MCF 10A (cell line): ENCODE measurements at regions of chr2 and their contacts with region 1.

Region 1: DNA sequence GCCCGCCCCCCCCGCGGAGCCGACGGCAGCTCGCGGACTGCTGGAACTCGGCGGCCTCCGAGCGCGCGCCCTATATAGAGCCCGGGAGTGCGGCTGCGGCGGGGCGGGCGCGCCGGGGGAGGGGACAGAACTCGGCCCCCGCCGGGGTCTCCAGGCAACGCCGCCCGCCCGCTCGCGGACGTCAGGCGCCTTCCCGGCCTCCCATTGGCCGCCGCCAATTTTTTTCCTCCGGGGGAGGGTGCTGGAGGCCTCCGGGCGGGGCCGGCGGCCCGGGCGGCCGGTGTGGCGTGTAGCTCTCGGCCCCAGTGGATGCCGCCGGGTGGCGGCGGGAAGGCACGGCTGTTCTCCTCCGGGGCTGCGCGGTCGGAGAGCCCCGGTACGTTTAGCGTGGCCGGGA is at the start of gene ZFP36L2:
- DNase-seq: peak; percentile 95
- H3K4me3 Mint-ChIP-seq: peak within 1 kb of the TSS; percentile 93
- H3K27ac Mint-ChIP-seq: peak within 1 kb of the TSS; percentile 83
- H3K4me1 Mint-ChIP-seq: peaks cover 17% of the 10 kb centered on the region
- H3K27me3 Mint-ChIP-seq: no peaks in the 10 kb centered on the region
- CTCF ChIP-seq: no peak
- total RNA-seq, gene ZFP36L2: 107 and 162 TPM in 2 replicates

Region 2: GRCh38 chr2:42859006-42859552 is 367.5 kb before region 1 on chr2:
- CTCF ChIA-PET with region 1: interaction called, 17 read pairs
- POLR2A ChIA-PET with region 1: interaction called, 4 read pairs
- intact Hi-C with region 1: loop called (anchors 1 kb)
- DNase-seq: peak; percentile 82
- H3K4me3 Mint-ChIP-seq: no peak overlapping the region
- H3K27ac Mint-ChIP-seq: no peak overlapping the region
- H3K4me1 Mint-ChIP-seq: peaks cover 12% of the 10 kb centered on the region
- H3K27me3 Mint-ChIP-seq: no peaks in the 10 kb centered on the region
- CTCF ChIP-seq: peak; percentile 91

Region 3: DNA sequence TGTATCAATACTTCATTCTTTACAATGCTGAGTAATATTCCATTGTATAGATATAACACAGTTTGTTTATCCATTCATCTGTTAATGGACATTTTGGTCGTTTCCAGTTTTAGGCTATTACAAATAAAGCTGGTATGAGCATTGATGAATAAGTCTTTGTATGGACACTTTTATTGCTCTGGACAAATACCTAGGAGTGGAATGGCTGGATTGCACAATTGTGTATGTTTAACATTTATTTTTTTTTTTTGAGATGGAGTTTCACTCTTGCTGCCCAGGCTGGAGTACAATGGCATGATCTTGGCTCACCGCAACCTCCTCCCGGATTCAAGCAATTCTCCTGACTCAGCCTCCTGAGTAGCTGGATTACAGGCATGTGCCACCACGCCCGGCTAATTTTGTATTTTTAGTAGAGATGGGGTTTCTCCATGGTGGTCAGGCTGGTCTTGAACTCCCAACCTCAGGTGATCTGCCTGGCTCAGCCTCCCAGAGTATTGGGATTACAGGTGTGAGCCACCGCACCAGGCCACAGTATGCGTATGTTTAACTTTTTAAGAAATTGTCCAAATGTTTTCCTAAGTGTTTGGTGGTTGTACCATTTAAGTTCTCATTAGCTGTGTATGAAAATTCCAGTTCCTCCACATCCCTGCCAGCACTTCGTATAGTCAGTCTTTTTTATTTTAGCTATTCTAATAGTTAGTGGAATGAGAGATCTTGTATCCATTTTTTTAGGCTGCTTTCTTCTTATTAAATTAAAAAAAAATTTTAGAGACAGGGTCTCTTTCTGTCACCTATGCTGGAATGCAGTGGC is 239.2 kb before region 1 on chr2:
- CTCF ChIA-PET with region 1: interaction called, 18 read pairs
- POLR2A ChIA-PET with region 1: interaction called, 28 read pairs
- intact Hi-C with region 1: no loop called
- DNase-seq: peak; percentile 88
- H3K4me3 Mint-ChIP-seq: no peak overlapping the region
- H3K27ac Mint-ChIP-seq: peak overlapping the region; percentile 90
- H3K4me1 Mint-ChIP-seq: peaks cover 19% of the 10 kb centered on the region
- H3K27me3 Mint-ChIP-seq: no peaks in the 10 kb centered on the region
- CTCF ChIP-seq: no peak

Region 4: GRCh38 chr2:43059183-43059897 is 167.2 kb before region 1 on chr2:
- CTCF ChIA-PET with region 1: interaction called, 3 read pairs
- POLR2A ChIA-PET with region 1: interaction called, 14 read pairs
- intact Hi-C with region 1: no loop called
- DNase-seq: peak; percentile 98
- H3K4me3 Mint-ChIP-seq: no peak overlapping the region
- H3K27ac Mint-ChIP-seq: peak overlapping the region; percentile 63
- H3K4me1 Mint-ChIP-seq: peaks cover 27% of the 10 kb centered on the region
- H3K27me3 Mint-ChIP-seq: no peaks in the 10 kb centered on the region
- CTCF ChIP-seq: no peak

Region 5: DNA sequence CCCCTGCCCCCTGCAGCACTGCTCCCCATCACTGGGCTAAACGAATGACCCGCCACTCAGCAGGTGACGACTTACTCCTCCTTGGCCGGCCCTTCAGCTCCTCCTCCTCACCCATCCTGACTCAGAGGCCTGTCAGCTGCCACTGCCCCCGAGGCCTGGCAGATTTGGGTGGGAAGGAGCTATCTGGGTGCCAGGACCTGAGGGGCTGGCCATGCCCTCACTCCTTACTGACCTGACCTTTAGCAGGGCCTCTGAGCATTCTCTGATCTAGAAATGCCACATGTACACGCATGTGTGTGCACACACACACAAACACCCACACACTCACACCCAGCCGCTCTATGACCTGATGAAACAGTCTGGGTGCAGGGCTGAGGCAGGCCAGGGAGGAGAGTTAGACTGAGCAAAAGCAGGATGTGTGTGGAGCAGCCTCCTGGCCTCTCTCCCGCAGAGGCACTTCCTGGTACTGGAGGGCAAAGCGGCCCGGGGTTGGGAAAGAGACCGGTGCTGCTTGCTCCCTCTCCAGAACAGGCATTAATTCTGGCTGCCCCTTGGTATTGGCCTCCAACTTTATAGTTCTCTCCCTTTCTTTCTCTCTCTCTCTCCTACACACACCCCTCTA is 68.2 kb before region 1 on chr2:
- CTCF ChIA-PET with region 1: interaction called, 5 read pairs
- POLR2A ChIA-PET with region 1: interaction called, 60 read pairs
- intact Hi-C with region 1: loop called (anchors 1 kb)
- DNase-seq: peak; percentile 92
- H3K4me3 Mint-ChIP-seq: peak overlapping the region; percentile 62
- H3K27ac Mint-ChIP-seq: peak overlapping the region; percentile 98
- H3K4me1 Mint-ChIP-seq: peaks cover 57% of the 10 kb centered on the region
- H3K27me3 Mint-ChIP-seq: no peaks in the 10 kb centered on the region
- CTCF ChIP-seq: no peak

Region 6: DNA sequence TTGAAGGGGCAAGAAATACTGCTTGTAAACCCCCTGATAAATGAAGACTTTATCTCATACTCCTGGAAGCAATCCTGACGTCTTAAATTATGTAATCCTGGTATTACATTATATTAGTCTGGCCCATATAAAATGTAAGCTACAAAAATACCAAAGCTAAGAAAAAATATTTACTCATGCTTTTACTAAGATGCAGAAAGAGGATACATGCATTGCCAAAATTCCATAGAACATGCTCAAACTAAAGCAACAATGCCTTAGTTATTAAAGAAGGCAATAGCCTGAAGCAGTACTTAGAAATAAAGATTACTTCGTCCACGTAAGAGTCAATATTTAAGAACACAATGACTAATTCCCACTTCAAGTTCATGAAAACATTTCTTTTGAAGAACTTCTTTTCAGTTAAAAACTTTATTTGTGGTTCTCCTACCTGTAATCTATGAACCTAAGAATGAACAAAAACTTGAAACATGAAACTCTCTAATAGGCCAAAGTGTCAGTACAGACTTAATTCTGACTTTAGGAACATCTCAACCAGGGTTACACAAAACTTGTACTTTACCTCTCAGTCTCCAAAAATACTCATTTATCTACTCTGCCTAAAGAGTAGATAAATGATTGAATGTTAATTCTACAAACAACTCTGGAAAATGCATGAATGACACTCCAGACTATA is 252.0 kb after region 1 on chr2:
- CTCF ChIA-PET with region 1: interaction called, 56 read pairs
- POLR2A ChIA-PET with region 1: interaction called, 89 read pairs
- intact Hi-C with region 1: no loop called
- DNase-seq: no peak
- H3K4me3 Mint-ChIP-seq: no peak overlapping the region
- H3K27ac Mint-ChIP-seq: peak overlapping the region; percentile 37
- H3K4me1 Mint-ChIP-seq: peaks cover 46% of the 10 kb centered on the region
- H3K27me3 Mint-ChIP-seq: no peaks in the 10 kb centered on the region
- CTCF ChIP-seq: no peak

Region 7: GRCh38 chr2:43905371-43905803 is 678.8 kb after region 1 on chr2:
- CTCF ChIA-PET with region 1: no interaction called
- POLR2A ChIA-PET with region 1: no interaction called
- intact Hi-C with region 1: no loop called
- DNase-seq: no peak
- H3K4me3 Mint-ChIP-seq: no peak overlapping the region
- H3K27ac Mint-ChIP-seq: no peak overlapping the region
- H3K4me1 Mint-ChIP-seq: peaks cover 5% of the 10 kb centered on the region
- H3K27me3 Mint-ChIP-seq: no peaks in the 10 kb centered on the region
- CTCF ChIP-seq: no peak